Naive thymus-derived CD4-positive, alpha-beta T cell (primary cell): ENCODE measurements at regions of chr6 and their contacts with region 1.

Region 1: GRCh38 chr6:170271771-170272314 is 19.0 kb downstream of the DLL1 start:
- DNase-seq: peak; percentile 52 to 86 (median 81)
- ATAC-seq: peak; percentile 90
- H3K4me3 ChIP-seq: peak overlapping the region; percentile 71
- H3K4me3 Mint-ChIP-seq: peak overlapping the region; percentile 79 to 93 (median 88)
- H3K27ac ChIP-seq: peak overlapping the region; percentile 75
- H3K27ac Mint-ChIP-seq: peak overlapping the region; percentile 77 to 98 (median 94)
- H3K4me1 ChIP-seq: peaks cover 14 to 21% of the 10 kb centered on the region in 2 donors
- H3K4me1 Mint-ChIP-seq: peaks cover 15 to 42% (median 28%) of the 10 kb centered on the region in 7 donors
- H3K27me3 ChIP-seq: no peaks in the 10 kb centered on the region
- H3K27me3 Mint-ChIP-seq: peaks cover 0 to 64% (median 0%) of the 10 kb centered on the region in 5 donors

Region 2: DNA sequence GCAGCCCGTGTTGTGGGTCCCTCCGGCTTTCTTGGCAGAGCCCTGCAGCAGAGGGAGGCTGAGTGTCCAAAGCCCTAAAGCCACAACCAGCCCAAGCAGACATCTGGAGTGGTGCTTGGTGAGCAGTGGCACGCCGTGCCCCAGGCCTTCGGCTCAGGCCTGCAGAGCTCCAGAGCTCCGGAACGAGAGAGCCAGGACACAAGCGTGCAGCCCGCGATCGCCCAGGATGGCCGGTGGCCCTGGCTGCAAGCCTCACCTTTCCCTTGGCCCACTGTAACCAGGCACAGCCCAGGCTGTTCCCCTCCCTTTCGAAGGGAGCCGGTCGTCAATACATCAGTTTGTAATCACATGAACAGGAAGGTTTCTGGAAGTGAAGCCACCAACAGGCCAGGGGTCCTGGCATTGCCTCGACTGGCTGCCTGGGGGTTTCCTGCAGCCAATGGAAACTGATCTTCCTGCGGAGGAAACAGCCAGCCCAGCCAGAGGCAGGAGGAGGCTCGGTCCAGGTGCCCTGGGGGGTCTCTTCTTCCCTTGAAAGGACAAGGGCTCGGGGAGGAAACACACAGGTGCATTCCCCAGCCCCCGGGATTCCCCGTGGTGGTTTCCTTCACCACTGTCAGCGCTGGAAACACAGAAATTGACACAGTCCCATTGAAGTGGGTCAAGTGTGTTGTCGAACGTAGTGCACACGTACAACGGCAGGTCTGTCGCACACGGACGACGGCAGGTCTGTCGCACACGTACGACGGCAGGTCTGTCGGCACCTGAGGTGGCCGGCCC is 62.1 kb before region 1 on chr6:
- CTCF ChIA-PET with region 1: no interaction called
- POLR2A ChIA-PET with region 1: no interaction called
- intact Hi-C with region 1: no loop called
- DNase-seq: peak in 1 of 9 donors; percentile 15
- ATAC-seq: peak; percentile 26
- H3K4me3 ChIP-seq: no peak overlapping the region
- H3K4me3 Mint-ChIP-seq: no peak overlapping the region
- H3K27ac ChIP-seq: no peak overlapping the region
- H3K27ac Mint-ChIP-seq: no peak overlapping the region
- H3K4me1 ChIP-seq: no peaks in the 10 kb centered on the region
- H3K4me1 Mint-ChIP-seq: peaks cover 0 to 9% (median 0%) of the 10 kb centered on the region in 7 donors
- H3K27me3 ChIP-seq: no peaks in the 10 kb centered on the region
- H3K27me3 Mint-ChIP-seq: peaks cover 0 to 12% (median 5%) of the 10 kb centered on the region in 5 donors

Region 3: DNA sequence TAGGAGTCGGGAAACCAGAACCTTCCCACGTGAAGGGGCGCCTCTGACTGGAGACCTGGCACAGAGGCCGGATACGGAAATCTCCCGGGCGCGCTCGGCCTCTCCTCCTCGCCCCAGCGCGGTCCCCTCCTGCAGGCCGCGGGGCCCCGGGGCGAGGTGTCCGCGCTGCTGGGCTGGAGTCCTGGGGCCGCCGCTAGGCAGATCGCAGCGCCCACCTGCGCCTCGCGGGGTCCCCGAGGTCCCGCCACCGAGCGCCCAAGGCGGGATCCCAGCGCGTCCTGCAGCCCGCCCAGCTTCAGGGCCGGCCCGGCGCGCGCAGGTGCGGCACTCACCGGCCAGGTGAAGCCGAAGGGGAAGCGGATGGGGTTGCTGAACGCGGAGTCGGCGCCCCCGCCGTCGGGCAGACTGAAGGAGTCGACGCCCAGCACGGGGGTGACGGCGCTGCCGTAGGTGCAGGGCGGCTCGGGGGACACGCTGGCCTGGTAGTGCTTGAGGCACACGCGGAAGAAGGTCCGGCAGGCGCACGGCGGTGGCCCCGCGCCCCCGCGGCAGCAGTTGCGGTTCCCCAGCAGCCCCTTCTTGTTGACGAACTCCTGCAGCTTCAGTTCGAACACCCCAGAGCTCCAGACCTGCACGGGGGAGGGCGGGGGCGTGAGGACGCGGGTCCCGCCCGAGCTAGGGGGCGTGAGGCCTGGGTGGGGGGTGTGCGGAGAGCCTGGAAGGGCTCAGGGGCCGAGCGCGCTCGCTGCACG is 17.5 kb after region 1 on chr6:
- CTCF ChIA-PET with region 1: interaction called, 3 read pairs
- POLR2A ChIA-PET with region 1: interaction called, 35 read pairs
- intact Hi-C with region 1: loop called (anchors 1 kb)
- DNase-seq: peak in 3 of 9 donors; percentile 34 to 37 (median 37)
- ATAC-seq: no peak
- H3K4me3 ChIP-seq: peak overlapping the region; percentile 66
- H3K4me3 Mint-ChIP-seq: peak overlapping the region; percentile 85 to 99 (median 94)
- H3K27ac ChIP-seq: peak overlapping the region; percentile 25
- H3K27ac Mint-ChIP-seq: peak overlapping the region; percentile 60 to 90 (median 76)
- H3K4me1 ChIP-seq: peaks cover 24 to 28% of the 10 kb centered on the region in 2 donors
- H3K4me1 Mint-ChIP-seq: peaks cover 20 to 45% (median 40%) of the 10 kb centered on the region in 7 donors
- H3K27me3 ChIP-seq: peaks cover 9 to 10% of the 10 kb centered on the region in 2 donors
- H3K27me3 Mint-ChIP-seq: peaks cover 6 to 84% (median 33%) of the 10 kb centered on the region in 5 donors

Region 4: GRCh38 chr6:170360476-170360875 is 88.6 kb after region 1 on chr6:
- CTCF ChIA-PET with region 1: no interaction called
- POLR2A ChIA-PET with region 1: no interaction called
- intact Hi-C with region 1: no loop called
- DNase-seq: no peak
- ATAC-seq: no peak
- H3K4me3 ChIP-seq: no peak overlapping the region
- H3K4me3 Mint-ChIP-seq: no peak overlapping the region
- H3K27ac ChIP-seq: no peak overlapping the region
- H3K27ac Mint-ChIP-seq: no peak overlapping the region
- H3K4me1 ChIP-seq: no peaks in the 10 kb centered on the region
- H3K4me1 Mint-ChIP-seq: peaks cover 0 to 5% (median 4%) of the 10 kb centered on the region in 7 donors
- H3K27me3 ChIP-seq: no peaks in the 10 kb centered on the region
- H3K27me3 Mint-ChIP-seq: no peaks in the 10 kb centered on the region